ENCODE measurements at regions of chr1 and their contacts with region 1.

Region 1: DNA sequence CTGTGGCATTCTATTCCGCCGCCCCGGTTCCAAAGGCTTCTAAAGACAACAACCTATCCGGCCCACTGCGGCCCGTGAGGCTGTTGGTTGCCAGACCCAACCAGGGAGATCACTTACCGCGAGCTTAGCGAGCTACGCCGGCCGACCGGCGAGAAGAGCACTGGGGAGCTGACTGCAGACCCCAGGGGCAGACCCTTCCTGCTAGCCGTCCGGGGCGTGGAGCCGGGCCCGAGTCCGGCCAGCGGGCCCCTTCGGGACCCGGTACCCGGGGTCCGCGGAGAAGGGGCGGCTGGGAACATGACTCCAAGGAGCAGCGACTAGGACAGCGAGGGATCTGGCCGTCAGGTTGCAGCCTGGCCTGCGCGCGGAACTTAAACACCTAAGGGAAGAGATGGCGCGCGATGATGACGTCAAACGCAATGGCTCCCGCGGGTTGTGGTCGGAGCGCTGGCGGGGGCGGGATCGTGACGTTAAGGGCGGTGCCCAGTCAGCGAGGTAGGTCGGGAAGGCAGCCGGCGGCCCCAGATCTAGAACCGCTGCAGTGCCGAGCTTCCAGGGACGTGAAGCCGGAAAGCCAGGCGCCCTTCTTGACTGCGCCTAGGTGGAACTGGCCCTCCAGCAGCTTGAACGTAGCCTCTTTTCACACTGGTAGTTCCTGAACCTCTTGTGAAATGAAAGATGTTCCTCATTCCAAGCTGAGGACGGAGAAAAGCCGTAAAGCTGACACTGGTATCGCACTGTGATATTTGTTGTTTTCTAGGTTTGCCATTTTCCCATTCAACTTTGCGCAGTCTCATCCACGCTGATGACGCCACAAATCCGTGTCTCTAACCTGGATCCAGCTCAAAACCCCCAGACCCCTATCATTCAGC is at the start of gene NUP133:
- DNase-seq: peak; percentile 100
- H3K4me3 Mint-ChIP-seq: peak within 1 kb of the TSS; percentile 88
- H3K27ac Mint-ChIP-seq: peak within 1 kb of the TSS; percentile 99
- H3K4me1 Mint-ChIP-seq: peaks cover 13% of the 10 kb centered on the region
- H3K27me3 Mint-ChIP-seq: no peaks in the 10 kb centered on the region
- CTCF ChIP-seq: no peak
- total RNA-seq, gene NUP133: 65.2 and 67.3 TPM in 2 replicates

Region 2: GRCh38 chr1:228378090-228378872 is 1129.9 kb before region 1 on chr1:
- CTCF ChIA-PET with region 1: no interaction called
- POLR2A ChIA-PET with region 1: no interaction called
- intact Hi-C with region 1: no loop called
- DNase-seq: peak; percentile 88
- H3K4me3 Mint-ChIP-seq: peak overlapping the region; percentile 95
- H3K27ac Mint-ChIP-seq: peak overlapping the region; percentile 84
- H3K4me1 Mint-ChIP-seq: peaks cover 21% of the 10 kb centered on the region
- H3K27me3 Mint-ChIP-seq: no peaks in the 10 kb centered on the region
- CTCF ChIP-seq: peak; percentile 91

Region 3: DNA sequence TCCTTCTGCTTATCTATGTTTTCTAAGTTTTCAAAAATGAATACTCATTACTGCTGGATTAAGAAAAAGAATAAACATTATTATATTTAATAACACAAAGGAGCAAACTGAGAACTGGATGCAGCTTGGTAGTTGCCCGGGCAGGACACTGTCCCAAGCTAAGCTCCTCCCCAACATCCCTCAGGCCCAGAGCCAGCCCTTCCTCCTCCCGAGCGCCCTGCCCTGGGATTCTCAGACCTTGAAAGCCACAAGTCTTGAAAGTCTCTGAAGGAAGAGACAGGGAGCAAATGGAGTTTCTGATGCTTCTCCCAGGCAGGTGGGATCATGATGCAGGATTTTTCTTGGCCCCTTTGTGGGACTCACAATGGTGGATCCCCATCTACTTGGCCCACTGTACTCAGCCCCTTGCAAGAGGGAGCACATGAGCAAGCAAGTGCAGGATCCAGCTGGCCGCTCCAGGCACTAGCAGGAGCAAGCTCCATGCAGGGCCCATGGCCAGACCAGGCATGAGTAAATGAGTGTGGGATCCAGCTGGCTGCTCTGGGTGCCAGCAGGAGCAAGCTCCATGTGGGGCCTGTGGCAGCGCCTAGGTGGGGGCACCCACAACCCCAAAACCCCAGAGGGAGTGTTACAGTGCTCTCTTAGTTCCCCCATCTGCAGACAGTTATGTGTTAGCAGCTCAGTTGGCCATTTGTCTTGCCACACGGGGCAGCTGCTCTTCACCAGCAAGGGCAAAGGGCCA is 269.3 kb before region 1 on chr1:
- CTCF ChIA-PET with region 1: interaction called, 3 read pairs
- POLR2A ChIA-PET with region 1: interaction called, 10 read pairs
- intact Hi-C with region 1: no loop called
- DNase-seq: peak; percentile 78
- H3K4me3 Mint-ChIP-seq: no peak overlapping the region
- H3K27ac Mint-ChIP-seq: peak overlapping the region; percentile 92
- H3K4me1 Mint-ChIP-seq: peaks cover 20% of the 10 kb centered on the region
- H3K27me3 Mint-ChIP-seq: no peaks in the 10 kb centered on the region
- CTCF ChIP-seq: no peak

Region 4: GRCh38 chr1:229341774-229342655 is 166.2 kb before region 1 on chr1:
- CTCF ChIA-PET with region 1: no interaction called
- POLR2A ChIA-PET with region 1: interaction called, 13 read pairs
- intact Hi-C with region 1: no loop called
- DNase-seq: peak; percentile 93
- H3K4me3 Mint-ChIP-seq: peak overlapping the region; percentile 89
- H3K27ac Mint-ChIP-seq: peak overlapping the region; percentile 80
- H3K4me1 Mint-ChIP-seq: peaks cover 38% of the 10 kb centered on the region
- H3K27me3 Mint-ChIP-seq: peaks cover 21% of the 10 kb centered on the region
- CTCF ChIP-seq: no peak

Region 5: GRCh38 chr1:229487181-229487580 is 21.0 kb before region 1 on chr1:
- CTCF ChIA-PET with region 1: interaction called, 23 read pairs
- POLR2A ChIA-PET with region 1: interaction called, 20 read pairs
- intact Hi-C with region 1: no loop called
- DNase-seq: no peak
- H3K4me3 Mint-ChIP-seq: no peak overlapping the region
- H3K27ac Mint-ChIP-seq: no peak overlapping the region
- H3K4me1 Mint-ChIP-seq: no peaks in the 10 kb centered on the region
- H3K27me3 Mint-ChIP-seq: no peaks in the 10 kb centered on the region
- CTCF ChIP-seq: no peak

Region 6: GRCh38 chr1:229523052-229523451 is 14.9 kb after region 1 on chr1:
- CTCF ChIA-PET with region 1: interaction called, 7 read pairs
- POLR2A ChIA-PET with region 1: interaction called, 24 read pairs
- intact Hi-C with region 1: no loop called
- DNase-seq: no peak
- H3K4me3 Mint-ChIP-seq: no peak overlapping the region
- H3K27ac Mint-ChIP-seq: peak overlapping the region; percentile 7
- H3K4me1 Mint-ChIP-seq: no peaks in the 10 kb centered on the region
- H3K27me3 Mint-ChIP-seq: no peaks in the 10 kb centered on the region
- CTCF ChIP-seq: no peak

Region 7: DNA sequence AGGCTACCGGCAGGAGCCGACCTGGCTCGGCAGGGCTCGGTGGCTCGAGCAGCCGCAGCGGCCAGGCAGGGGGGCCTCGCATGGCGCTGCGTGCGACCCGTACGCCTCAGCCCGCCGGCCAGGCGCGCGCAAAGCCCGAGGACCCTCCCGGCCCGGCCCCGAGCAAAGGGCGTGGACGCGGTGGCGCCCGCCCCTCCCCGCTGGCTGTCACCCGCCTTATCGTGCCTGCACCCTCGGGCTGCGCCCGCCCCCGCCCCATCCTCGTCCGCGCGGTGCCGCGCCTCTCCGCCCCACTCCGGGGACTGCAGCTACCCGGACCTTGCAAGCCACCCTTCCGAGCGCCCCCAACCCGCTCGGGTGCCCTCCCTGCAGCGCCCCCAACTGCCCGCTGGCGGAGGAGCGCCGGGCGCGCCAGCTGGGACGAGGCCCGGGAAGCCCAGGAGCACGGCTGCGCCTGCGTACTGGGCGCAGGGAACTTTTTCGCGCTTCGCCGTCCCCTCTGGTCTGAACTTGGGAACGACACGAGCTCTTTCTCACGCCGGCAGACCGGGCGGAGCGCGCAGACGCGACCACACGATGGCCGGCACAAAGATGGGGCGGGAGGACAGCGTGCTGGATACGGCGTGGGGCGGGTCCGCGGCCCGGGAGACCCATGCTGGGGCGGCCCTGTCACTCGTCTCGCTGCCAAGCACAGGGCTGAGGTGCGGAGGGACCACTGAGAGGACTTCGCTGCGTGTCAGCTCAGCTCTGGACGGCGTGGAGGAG is 50.6 kb after region 1 on chr1 and contains the start of gene ABCB10:
- CTCF ChIA-PET with region 1: interaction called, 14 read pairs
- POLR2A ChIA-PET with region 1: interaction called, 88 read pairs
- intact Hi-C with region 1: no loop called
- DNase-seq: peak; percentile 100
- H3K4me3 Mint-ChIP-seq: peak within 1 kb of the TSS; percentile 83
- H3K27ac Mint-ChIP-seq: peak within 1 kb of the TSS; percentile 76
- H3K4me1 Mint-ChIP-seq: peaks cover 30% of the 10 kb centered on the region
- H3K27me3 Mint-ChIP-seq: no peaks in the 10 kb centered on the region
- CTCF ChIP-seq: peak; percentile 98
- total RNA-seq, gene ABCB10: 34.8 and 38.4 TPM in 2 replicates